ENCODE measurements at regions of chr6 and their contacts with region 1.

Region 1: GRCh38 chr6:110958329-110959192 is at the start of gene GTF3C6:
- DNase-seq: peak; percentile 81 to 92
- H3K4me3 ChIP-seq: peak within 1 kb of the TSS; percentile 74 to 96 (median 92)
- H3K27ac ChIP-seq: peak within 1 kb of the TSS; percentile 95
- H3K4me1 ChIP-seq: peaks cover 0 to 3% (median 1%) of the 10 kb centered on the region in 4 experiments; a peak in 1 of 7 replicates
- H3K27me3 ChIP-seq: no peaks in the 10 kb centered on the region
- CTCF ChIP-seq: no peak
- EP300 ChIP-seq: no peak
- POLR2A ChIP-seq: peak; percentile 94 to 95
- RAD21 ChIP-seq: no peak; a peak in 1 of 4 replicates
- total RNA-seq, gene GTF3C6: 87.4 and 93.9 TPM in 2 replicates

Region 2: DNA sequence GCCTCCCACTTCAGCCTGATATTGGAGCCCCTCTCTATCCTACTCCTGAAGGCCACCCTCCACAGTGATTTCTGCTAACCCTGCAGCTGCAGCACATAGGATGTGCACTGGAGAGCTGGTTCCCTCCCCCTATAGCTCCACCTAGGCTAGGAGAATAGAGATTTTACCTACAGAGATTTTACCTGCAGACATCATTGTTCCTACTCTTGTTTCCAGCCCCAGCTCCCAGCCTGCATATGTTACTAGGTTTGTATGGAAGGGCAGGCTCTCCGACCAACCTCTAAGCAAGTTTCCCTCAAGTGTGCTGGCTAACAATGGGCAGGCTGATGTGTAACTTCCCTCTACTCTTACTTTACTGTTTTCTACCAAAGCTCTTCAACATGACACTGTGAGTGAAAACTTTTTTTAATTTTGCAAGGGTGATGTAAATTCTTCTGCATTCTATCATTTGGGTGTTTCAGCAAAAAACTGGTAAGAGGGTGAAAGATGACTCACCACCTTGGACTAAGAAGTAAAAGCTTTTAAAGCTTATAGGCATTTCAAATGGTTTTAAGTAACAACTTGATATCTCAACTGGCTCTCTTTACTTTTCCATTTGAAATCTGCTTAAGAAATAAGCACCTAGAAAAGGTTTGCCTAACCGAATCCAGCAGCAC is 250.1 kb before region 1 on chr6:
- CTCF ChIA-PET with region 1: no interaction called
- POLR2A ChIA-PET with region 1: no interaction called
- DNase-seq: no peak
- H3K4me3 ChIP-seq: no peak overlapping the region; a peak in 1 of 8 replicates
- H3K27ac ChIP-seq: no peak overlapping the region
- H3K4me1 ChIP-seq: peaks cover 0 to 6% (median 0%) of the 10 kb centered on the region in 4 experiments; a peak in 2 of 7 replicates
- H3K27me3 ChIP-seq: no peaks in the 10 kb centered on the region
- CTCF ChIP-seq: no peak
- EP300 ChIP-seq: no peak
- POLR2A ChIP-seq: no peak
- RAD21 ChIP-seq: no peak

Region 3: DNA sequence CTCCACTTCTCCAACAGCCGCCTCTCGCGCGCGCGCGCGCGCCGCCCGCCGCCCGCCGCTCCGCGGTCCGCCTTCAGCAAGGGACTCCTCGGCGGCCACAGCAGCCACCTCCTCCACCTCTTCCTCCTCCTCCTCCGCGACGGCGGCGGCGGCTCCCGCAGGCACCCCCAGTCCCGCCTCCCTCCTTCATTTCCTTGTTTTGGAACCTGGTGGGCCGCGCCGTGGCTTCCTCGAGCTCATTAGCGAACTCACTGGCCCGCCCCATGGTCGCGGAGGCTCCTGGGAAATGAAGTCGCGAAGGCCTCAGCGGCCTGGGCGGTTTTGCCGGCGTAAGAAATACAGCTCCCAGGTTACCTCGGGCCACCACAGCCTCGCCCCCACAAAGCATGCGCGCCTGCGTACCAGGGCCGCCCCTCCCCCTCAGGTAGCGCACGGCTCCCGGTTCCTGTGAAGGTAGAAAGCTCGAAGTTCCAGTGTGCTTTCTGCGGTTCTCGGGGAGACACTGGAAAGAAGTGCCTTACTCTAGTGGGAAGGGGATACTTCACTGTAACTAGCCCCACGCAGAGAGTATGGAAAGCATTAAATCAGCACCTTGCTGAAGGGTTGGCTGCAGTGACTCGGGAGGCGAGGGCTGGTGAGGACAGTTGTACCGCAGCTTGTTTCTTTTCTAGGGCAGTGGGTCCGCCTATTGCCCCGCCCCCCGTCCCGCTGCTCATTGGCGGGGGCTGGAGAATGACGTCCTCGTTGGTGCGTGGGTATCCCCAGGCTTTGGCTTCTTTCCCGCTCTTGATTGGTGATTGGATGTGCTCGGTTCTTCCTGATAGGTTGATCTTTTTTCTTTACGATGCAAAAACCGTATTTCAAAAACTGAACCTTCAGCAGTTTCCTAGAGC is 143.1 kb before region 1 on chr6 and contains the start of gene CDK19:
- CTCF ChIA-PET with region 1: interaction called, 4 read pairs
- POLR2A ChIA-PET with region 1: interaction called, 26 read pairs
- DNase-seq: peak; percentile 96 to 97
- H3K4me3 ChIP-seq: peak within 1 kb of the TSS; percentile 84 to 95 (median 92)
- H3K27ac ChIP-seq: peak within 1 kb of the TSS; percentile 99
- H3K4me1 ChIP-seq: peaks cover 0 to 3% (median 1%) of the 10 kb centered on the region in 4 experiments; a peak in 4 of 7 replicates
- H3K27me3 ChIP-seq: no peaks in the 10 kb centered on the region
- CTCF ChIP-seq: no peak
- EP300 ChIP-seq: no peak; a peak in 1 of 3 replicates
- POLR2A ChIP-seq: peak; percentile 90 to 99
- RAD21 ChIP-seq: no peak
- total RNA-seq, gene CDK19: 9.7 and 12.6 TPM in 2 replicates

Region 4: GRCh38 chr6:110841266-110841665 is 117.3 kb before region 1 on chr6:
- CTCF ChIA-PET with region 1: no interaction called
- POLR2A ChIA-PET with region 1: no interaction called
- DNase-seq: no peak
- H3K4me3 ChIP-seq: no peak overlapping the region
- H3K27ac ChIP-seq: no peak overlapping the region
- H3K4me1 ChIP-seq: no peaks in the 10 kb centered on the region
- H3K27me3 ChIP-seq: no peaks in the 10 kb centered on the region
- CTCF ChIP-seq: no peak
- EP300 ChIP-seq: no peak
- POLR2A ChIP-seq: no peak
- RAD21 ChIP-seq: no peak

Region 5: DNA sequence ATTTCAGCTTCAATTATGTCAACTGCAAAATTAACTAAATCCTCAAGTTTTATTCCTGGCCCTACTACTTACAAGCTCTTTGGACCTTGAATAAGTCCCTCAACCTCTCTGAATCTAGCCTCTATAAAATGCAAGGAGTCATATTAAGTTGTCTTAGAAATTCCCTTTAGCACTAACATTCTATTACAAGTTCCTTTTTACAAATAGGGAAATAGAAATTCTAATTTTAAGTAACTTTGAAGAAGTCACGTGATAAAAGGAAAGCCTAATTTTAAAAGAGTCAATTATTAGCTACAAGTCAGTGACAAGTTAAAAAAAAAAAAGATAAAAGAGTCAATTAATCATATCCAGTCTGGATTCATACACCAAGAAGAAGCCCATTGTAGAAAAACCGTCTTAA is 24.6 kb before region 1 on chr6:
- CTCF ChIA-PET with region 1: no interaction called
- POLR2A ChIA-PET with region 1: interaction called, 11 read pairs
- DNase-seq: no peak
- H3K4me3 ChIP-seq: no peak overlapping the region
- H3K27ac ChIP-seq: no peak overlapping the region
- H3K4me1 ChIP-seq: no peaks in the 10 kb centered on the region
- H3K27me3 ChIP-seq: no peaks in the 10 kb centered on the region
- CTCF ChIP-seq: no peak
- EP300 ChIP-seq: no peak
- POLR2A ChIP-seq: no peak
- RAD21 ChIP-seq: no peak

Region 6: DNA sequence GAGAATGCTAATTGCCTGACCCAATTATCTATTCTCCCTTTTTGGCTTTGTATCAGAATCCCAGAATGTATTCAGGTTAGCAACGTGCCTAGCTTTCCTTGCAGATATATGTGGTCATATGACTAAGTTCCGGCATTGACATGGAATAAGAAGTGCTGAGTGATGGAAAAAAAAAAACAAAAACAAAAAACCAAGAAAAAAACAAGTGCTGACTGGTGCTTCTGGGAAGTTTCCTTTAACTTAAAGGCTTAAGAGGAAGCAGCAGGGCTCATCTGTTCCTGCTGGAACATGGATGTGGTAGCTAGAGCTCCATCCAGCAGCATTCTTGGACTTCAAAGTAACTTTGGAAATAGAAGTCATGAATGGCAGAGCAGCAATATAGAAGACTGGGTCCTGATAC is 12.9 kb after region 1 on chr6:
- CTCF ChIA-PET with region 1: interaction called, 3 read pairs
- POLR2A ChIA-PET with region 1: interaction called, 29 read pairs
- DNase-seq: no peak
- H3K4me3 ChIP-seq: no peak overlapping the region
- H3K27ac ChIP-seq: no peak overlapping the region
- H3K4me1 ChIP-seq: no peaks in the 10 kb centered on the region
- H3K27me3 ChIP-seq: no peaks in the 10 kb centered on the region
- CTCF ChIP-seq: no peak
- EP300 ChIP-seq: no peak
- POLR2A ChIP-seq: no peak
- RAD21 ChIP-seq: no peak

Region 7: GRCh38 chr6:110981202-110981600 is 22.6 kb after region 1 on chr6:
- CTCF ChIA-PET with region 1: interaction called, 3 read pairs
- POLR2A ChIA-PET with region 1: interaction called, 38 read pairs
- DNase-seq: no peak
- H3K4me3 ChIP-seq: peak overlapping the region; percentile 75 to 96 (median 94)
- H3K27ac ChIP-seq: no peak overlapping the region
- H3K4me1 ChIP-seq: no peaks in the 10 kb centered on the region
- H3K27me3 ChIP-seq: no peaks in the 10 kb centered on the region
- CTCF ChIP-seq: no peak
- EP300 ChIP-seq: no peak
- POLR2A ChIP-seq: no peak
- RAD21 ChIP-seq: no peak

Region 8: GRCh38 chr6:111250791-111251354 is 292.3 kb after region 1 on chr6:
- CTCF ChIA-PET with region 1: no interaction called
- POLR2A ChIA-PET with region 1: no interaction called
- DNase-seq: no peak
- H3K4me3 ChIP-seq: no peak overlapping the region
- H3K27ac ChIP-seq: no peak overlapping the region
- H3K4me1 ChIP-seq: peaks cover 2 to 18% (median 11%) of the 10 kb centered on the region in 4 experiments; a peak in 6 of 7 replicates
- H3K27me3 ChIP-seq: no peaks in the 10 kb centered on the region
- CTCF ChIP-seq: no peak
- EP300 ChIP-seq: no peak
- POLR2A ChIP-seq: no peak
- RAD21 ChIP-seq: no peak

Measured in H1 (cell line).